Breast epithelium (tissue), 4 donors: ENCODE measurements at regions of chr9 and their contacts with region 1.

Region 1: GRCh38 chr9:5825223-5825622 is 7.7 kb downstream of the ERMP1 start:
- DNase-seq: no peak
- H3K4me3 ChIP-seq: no peak overlapping the region
- H3K27ac ChIP-seq: no peak overlapping the region
- H3K4me1 ChIP-seq: no peaks in the 10 kb centered on the region
- H3K27me3 ChIP-seq: no peaks in the 10 kb centered on the region
- CTCF ChIP-seq: no peak
- POLR2A ChIP-seq: no peak

Region 2: GRCh38 chr9:5750569-5750968 is 74.7 kb before region 1 on chr9:
- intact Hi-C with region 1: no loop called
- DNase-seq: no peak
- H3K4me3 ChIP-seq: no peak overlapping the region
- H3K27ac ChIP-seq: no peak overlapping the region
- H3K4me1 ChIP-seq: no peaks in the 10 kb centered on the region
- H3K27me3 ChIP-seq: no peaks in the 10 kb centered on the region
- CTCF ChIP-seq: no peak
- POLR2A ChIP-seq: no peak

Region 3: DNA sequence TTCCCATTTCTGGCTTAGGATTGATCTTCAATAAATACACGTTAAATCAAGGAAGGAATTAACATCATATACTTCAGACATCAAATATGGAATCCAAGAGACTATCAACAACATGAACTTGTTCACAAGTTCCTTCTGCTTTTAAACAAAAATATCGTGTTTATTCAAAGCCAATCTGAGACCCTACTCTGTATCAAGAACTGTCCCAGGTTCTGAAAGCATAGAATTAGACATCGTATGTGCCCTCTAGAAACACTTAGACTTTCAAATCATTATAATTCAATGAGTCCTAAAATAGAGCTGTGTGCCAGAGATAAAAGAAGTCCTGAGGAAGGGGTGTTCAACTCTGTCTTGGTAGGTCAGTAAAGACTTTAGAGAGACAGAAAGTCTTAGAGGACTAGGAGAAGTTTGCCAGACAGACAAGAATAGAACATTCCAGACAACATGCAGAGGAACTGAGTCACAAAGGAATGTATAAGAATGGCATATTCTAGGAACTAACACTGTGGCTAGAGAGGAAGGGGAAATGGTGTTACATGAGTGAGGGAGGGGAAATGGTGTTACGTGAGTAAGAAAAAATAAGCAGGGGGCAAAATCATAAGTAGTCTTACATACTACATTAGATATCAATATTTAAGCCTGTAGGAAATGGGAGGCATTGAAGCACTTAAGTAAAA is 505.9 kb after region 1 on chr9:
- intact Hi-C with region 1: loop called (anchors 10 kb)
- DNase-seq: no peak
- H3K4me3 ChIP-seq: no peak overlapping the region
- H3K27ac ChIP-seq: no peak overlapping the region
- H3K4me1 ChIP-seq: no peaks in the 10 kb centered on the region
- H3K27me3 ChIP-seq: no peaks in the 10 kb centered on the region
- CTCF ChIP-seq: no peak
- POLR2A ChIP-seq: no peak

Region 4: GRCh38 chr9:6632516-6633183 is 807.4 kb after region 1 on chr9:
- intact Hi-C with region 1: no loop called
- DNase-seq: no peak
- H3K4me3 ChIP-seq: no peak overlapping the region
- H3K27ac ChIP-seq: no peak overlapping the region
- H3K4me1 ChIP-seq: no peaks in the 10 kb centered on the region
- H3K27me3 ChIP-seq: no peaks in the 10 kb centered on the region
- CTCF ChIP-seq: no peak
- POLR2A ChIP-seq: no peak